ENCODE measurements at regions of chr4 and their contacts with region 1.

Region 1: DNA sequence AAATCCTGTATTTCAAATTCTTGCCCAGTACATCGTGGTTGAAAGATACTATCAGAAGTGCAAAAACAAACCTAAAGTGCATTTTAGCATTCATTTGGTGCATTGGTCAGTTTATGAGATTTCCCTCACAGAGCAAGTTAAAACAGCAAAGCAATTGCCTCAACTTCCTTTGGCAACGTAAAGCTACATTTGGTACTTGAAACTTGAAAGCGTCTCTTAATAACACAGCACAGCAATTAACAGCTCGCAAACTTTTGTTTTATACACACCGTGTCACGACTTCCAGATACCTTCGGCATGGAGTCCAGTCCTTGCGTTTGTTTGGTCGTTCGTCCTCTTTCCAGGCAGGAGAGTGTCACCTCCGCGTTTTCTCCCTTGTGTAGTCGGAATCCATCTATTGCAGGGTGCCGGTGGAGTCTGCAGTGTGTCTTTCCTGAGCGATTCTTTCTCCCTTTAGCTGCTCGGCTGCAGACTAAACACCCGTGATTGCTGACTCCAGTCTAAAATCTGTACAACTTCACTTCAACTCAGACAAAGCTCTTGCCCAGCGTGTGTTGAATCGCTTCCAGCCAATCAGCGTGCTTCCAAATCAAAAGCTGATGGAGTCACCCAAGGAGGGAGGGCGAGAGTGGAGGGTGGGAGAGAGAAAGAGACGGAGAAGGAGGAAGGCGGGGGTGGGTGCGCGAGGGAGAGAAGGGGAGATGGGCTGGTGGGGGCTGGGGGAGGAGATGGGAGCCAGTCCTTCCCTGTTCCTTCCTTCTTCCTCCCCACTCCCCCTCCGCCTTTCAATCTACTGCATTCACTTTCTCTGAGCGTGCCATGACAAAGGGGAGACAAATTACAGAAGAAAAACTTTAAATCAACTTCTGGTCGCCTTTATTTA is at the start of gene PCDH18:
- DNase-seq: peak; percentile 83 to 92 (median 89)
- ATAC-seq: peak; percentile 74 to 93 (median 92)
- H3K4me3 ChIP-seq: peak within 1 kb of the TSS; percentile 33 to 75 (median 60)
- H3K27ac ChIP-seq: peak within 1 kb of the TSS; percentile 64 to 87 (median 78)
- H3K4me1 ChIP-seq: peaks cover 0 to 16% (median 0%) of the 10 kb centered on the region in 12 donors
- H3K27me3 ChIP-seq: no peaks in the 10 kb centered on the region
- CTCF ChIP-seq: no peak
- POLR2A ChIP-seq: peak in 1 of 2 donors; percentile 63
- total RNA-seq, gene PCDH18: 2.2 to 14.5 (median 5.9) TPM

Region 2: GRCh38 chr4:137283737-137284136 is 248.5 kb before region 1 on chr4:
- intact Hi-C with region 1: loop called in 2 of 10 experiments (anchors 10 kb)
- DNase-seq: no peak
- ATAC-seq: no peak
- H3K4me3 ChIP-seq: no peak overlapping the region
- H3K27ac ChIP-seq: no peak overlapping the region
- H3K4me1 ChIP-seq: no peaks in the 10 kb centered on the region
- H3K27me3 ChIP-seq: no peaks in the 10 kb centered on the region
- CTCF ChIP-seq: peak in 9 of 12 donors; percentile 14 to 48 (median 30)
- POLR2A ChIP-seq: no peak

Region 3: DNA sequence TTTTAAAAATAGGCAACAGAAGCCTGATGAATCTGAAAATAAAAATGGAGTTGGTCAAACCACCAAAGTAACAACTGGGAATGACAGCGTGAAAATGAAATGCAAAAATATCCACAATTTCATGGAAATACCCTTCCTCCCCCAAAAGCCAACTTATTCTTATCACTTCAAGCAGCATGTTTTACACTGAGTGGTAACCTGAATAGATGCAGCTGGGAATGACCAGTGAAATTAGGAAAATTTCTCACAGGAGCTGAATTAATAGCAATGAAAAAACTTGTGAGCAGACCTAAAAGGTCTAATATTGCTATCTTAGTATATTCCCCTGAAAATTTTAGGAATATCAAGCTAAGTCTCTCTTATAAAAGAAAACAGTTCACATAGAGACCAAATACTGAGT is 238.9 kb before region 1 on chr4:
- intact Hi-C with region 1: loop called in 3 of 10 experiments (anchors 10 kb)
- DNase-seq: no peak
- ATAC-seq: no peak
- H3K4me3 ChIP-seq: peak overlapping the region in 1 of 12 donors; percentile 31
- H3K27ac ChIP-seq: peak overlapping the region in 3 of 12 donors; percentile 27 to 39 (median 28)
- H3K4me1 ChIP-seq: peaks cover 0 to 5% (median 0%) of the 10 kb centered on the region in 12 donors
- H3K27me3 ChIP-seq: no peaks in the 10 kb centered on the region
- CTCF ChIP-seq: no peak
- POLR2A ChIP-seq: no peak

Region 4: DNA sequence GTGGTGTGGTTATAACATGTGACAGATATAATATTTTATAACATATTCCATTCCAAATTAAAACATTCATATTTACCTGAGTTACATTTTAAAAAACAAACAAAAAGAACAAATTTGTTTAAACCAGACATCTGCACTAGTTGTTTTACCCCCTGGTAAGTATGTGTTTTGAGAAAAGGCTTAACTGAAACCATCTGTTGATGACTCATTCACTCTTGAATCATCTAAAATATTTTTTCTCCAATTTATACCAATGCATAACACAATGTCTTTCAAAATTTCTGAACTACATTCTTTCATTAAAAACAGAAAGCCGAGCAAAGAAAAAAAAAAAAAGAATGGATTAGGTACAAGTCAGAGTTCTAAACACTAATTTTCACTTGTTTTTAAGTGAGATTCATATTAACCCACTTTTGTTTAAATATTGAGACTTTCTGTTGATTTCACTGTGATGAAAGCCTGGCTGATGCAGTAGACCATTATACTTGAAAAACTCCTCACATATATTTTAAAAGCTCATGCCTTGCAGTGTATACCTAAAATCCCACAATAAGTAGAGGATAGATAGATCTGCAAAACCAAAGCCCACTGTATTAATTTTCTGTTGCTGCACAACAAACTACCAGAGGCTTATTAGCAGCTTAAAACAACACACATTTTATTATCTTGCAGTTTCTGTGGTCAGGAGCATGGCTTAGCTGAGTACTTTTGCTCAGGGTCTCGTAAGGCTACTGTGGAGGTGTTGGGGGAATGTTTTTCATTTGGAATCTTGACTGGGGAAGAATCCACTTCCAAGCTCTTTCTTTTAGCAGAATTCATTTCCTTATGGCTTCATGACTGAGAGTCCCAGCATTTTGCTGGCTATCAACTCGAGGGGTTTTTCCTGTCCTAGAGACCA is 221.4 kb before region 1 on chr4:
- intact Hi-C with region 1: loop called in 1 of 10 experiments (anchors 10 kb)
- DNase-seq: no peak
- ATAC-seq: peak in 2 of 4 donors; percentile 41 to 83
- H3K4me3 ChIP-seq: no peak overlapping the region
- H3K27ac ChIP-seq: peak overlapping the region in 8 of 12 donors; percentile 4 to 47 (median 16)
- H3K4me1 ChIP-seq: peaks cover 0 to 10% (median 0%) of the 10 kb centered on the region in 12 donors
- H3K27me3 ChIP-seq: no peaks in the 10 kb centered on the region
- CTCF ChIP-seq: no peak
- POLR2A ChIP-seq: no peak

Region 5: DNA sequence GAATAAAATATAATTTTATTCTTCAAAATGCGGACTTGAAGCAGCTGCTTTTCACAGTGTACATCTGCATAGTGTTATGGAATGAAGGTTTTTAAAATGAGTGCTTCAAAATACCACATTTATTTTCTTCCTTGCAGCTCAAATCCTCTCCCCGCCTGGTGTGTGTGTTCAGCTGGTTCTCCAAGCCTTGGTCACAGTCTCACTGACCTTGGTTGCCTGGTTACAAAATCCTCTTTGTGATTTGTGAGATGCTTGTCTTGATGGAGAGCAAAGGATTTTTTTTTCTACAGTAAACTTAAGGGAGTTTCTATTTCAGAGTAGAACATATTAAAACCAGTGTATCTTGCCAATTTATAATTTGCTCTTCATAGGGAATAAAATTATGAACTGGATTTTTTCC is 139.2 kb before region 1 on chr4:
- intact Hi-C with region 1: loop called in 4 of 10 experiments (anchors 5 to 10 kb)
- DNase-seq: peak in 3 of 5 donors; percentile 31 to 44 (median 32)
- ATAC-seq: peak in 3 of 4 donors; percentile 54 to 74 (median 62)
- H3K4me3 ChIP-seq: no peak overlapping the region
- H3K27ac ChIP-seq: peak overlapping the region in 7 of 12 donors; percentile 8 to 37 (median 15)
- H3K4me1 ChIP-seq: peaks cover 0 to 19% (median 0%) of the 10 kb centered on the region in 12 donors
- H3K27me3 ChIP-seq: no peaks in the 10 kb centered on the region
- CTCF ChIP-seq: no peak
- POLR2A ChIP-seq: no peak

Region 6: GRCh38 chr4:137694138-137694537 is 161.9 kb after region 1 on chr4:
- intact Hi-C with region 1: loop called in 1 of 10 experiments (anchors 10 kb)
- DNase-seq: peak in 2 of 5 donors; percentile 26 to 41
- ATAC-seq: peak in 1 of 4 donors; percentile 51
- H3K4me3 ChIP-seq: no peak overlapping the region
- H3K27ac ChIP-seq: no peak overlapping the region
- H3K4me1 ChIP-seq: peaks cover 0 to 5% (median 0%) of the 10 kb centered on the region in 12 donors
- H3K27me3 ChIP-seq: no peaks in the 10 kb centered on the region
- CTCF ChIP-seq: no peak
- POLR2A ChIP-seq: no peak

Region 7: GRCh38 chr4:137705171-137705783 is 173.1 kb after region 1 on chr4:
- intact Hi-C with region 1: loop called in 2 of 10 experiments (anchors 10 kb)
- DNase-seq: peak in 1 of 5 donors; percentile 17
- ATAC-seq: peak; percentile 68 to 88 (median 86)
- H3K4me3 ChIP-seq: no peak overlapping the region
- H3K27ac ChIP-seq: peak overlapping the region in 10 of 12 donors; percentile 4 to 73 (median 34)
- H3K4me1 ChIP-seq: peaks cover 0 to 35% (median 8%) of the 10 kb centered on the region in 12 donors
- H3K27me3 ChIP-seq: no peaks in the 10 kb centered on the region
- CTCF ChIP-seq: no peak
- POLR2A ChIP-seq: no peak

Measured in heart left ventricle (tissue), 16 donors.